ENCODE measurements at regions of chr7 and their contacts with region 1.

Region 1: DNA sequence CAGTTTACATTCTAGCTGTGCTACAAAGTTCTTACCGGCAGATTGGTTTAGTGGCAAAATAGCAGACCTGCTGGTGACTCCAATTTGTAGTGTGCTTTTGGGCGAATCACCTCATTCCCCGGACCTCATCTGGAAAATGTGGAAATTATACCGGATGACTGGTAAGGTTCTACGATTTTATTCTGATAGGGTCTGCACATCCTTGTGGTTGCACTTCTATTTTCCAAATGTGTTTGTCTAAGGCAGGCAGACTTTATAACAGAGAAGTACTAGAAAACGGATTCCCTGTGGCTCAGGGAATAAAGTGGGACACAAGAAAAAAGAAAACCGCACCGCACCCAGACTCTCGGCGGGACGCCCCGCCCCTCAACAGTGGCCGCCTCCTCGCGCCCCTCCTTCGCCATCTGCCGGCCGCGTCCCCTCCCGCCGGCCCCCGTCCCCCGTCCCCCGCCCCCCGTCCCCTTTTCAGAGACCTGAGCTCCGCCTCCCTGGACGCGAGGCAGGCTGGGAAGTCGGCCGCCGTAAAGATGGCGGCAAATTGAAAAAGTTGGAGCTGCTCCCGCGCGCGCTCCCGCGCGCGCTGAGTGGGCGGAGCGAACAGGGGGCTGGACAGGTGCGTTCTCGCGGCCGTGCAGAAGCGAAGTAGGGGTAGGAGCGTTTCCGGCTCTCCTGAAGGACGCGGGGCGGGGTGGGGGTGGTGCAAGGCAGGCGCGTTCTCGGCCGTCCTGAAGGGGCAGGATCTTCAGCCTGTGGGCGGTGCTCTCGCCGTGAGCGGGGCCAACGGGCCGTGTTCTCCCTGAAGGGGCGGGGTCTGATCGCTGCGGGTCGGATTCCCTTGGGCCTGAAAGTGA is 531 bp upstream of the CCM2 start:
- DNase-seq: peak; percentile 96
- ATAC-seq: peak; percentile 88
- H3K4me3 ChIP-seq: peak overlapping the region; percentile 95
- H3K27ac ChIP-seq: peak overlapping the region; percentile 79
- H3K4me1 ChIP-seq: peaks cover 43% of the 10 kb centered on the region
- H3K27me3 ChIP-seq: no peaks in the 10 kb centered on the region
- CTCF ChIP-seq: no peak
- EP300 ChIP-seq: no peak
- POLR2A ChIP-seq: no peak; the same call in none of the 2 replicates
- RAD21 ChIP-seq: no peak

Region 2: DNA sequence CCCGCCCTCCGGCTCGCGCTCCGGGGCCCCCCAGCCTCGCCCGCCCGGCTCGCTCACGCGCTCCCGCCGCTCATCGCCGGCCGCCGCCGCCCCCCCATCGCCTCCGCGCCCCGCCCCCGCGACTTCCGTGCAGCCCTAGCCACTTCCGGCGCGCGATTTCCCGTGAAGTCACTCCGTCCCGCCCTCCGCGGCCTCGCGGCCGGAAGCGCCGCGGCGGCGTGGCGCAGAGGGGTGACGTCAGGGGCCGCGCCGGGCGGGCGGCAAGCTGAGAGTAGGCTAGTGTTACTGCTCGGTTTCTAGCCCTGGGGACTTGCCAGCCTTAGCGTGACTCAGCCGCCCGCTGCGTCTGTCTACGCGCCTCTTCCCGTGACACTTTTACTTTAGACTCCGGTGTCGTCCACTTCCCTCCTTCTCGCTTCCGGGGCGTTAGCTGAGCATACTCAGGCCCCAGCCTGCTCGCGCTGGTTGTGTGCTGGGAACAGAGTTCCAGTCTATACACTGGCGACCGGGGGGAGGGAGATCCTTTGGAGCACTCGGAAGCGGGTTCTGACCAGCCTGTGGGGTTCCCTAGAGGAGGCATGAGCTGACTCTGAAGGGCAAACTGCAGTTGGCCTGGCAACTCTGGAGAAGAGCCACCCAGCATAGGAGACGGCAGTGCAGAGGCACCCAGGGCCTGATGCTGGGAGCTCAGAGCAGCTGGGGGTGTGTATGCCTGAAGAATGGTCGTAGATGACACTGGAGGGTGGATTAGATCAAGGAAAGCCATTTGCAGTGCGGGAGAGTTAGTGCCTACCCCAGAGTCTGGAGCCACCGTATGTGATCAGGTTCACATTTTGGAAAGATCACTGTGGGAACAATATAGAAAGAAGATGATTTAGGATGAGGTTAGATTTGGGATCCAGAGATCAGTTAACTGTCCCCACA is 113.8 kb before region 1 on chr7 and contains the start of gene PURB:
- CTCF ChIA-PET with region 1: no interaction called
- POLR2A ChIA-PET with region 1: interaction called, 6 read pairs
- RAD21 ChIA-PET with region 1: interaction called, 9 read pairs
- SMC1A ChIA-PET with region 1: interaction called, 3 read pairs
- in situ Hi-C with region 1: no loop called
- intact Hi-C with region 1: loop called (anchors 1 kb)
- DNase-seq: peak; percentile 79
- ATAC-seq: peak; percentile 88
- H3K4me3 ChIP-seq: peak within 1 kb of the TSS; percentile 99
- H3K27ac ChIP-seq: peak within 1 kb of the TSS; percentile 99
- H3K4me1 ChIP-seq: 0 out of 2 replicates have a peak, but pooled peaks cover 3% of the 10 kb centered on the region
- H3K27me3 ChIP-seq: no peaks in the 10 kb centered on the region
- CTCF ChIP-seq: no peak; a peak in 1 of 6 replicates
- EP300 ChIP-seq: peak; percentile 62 to 64; a peak in 3 of 4 replicates
- POLR2A ChIP-seq: peak; percentile 91
- RAD21 ChIP-seq: no peak
- polyA plus RNA-seq, gene PURB: 2.5 to 2.8 TPM

Region 3: GRCh38 chr7:44980393-44981034 is 19.0 kb before region 1 on chr7:
- CTCF ChIA-PET with region 1: interaction called, 13 read pairs
- POLR2A ChIA-PET with region 1: interaction called, 280 read pairs
- RAD21 ChIA-PET with region 1: interaction called, 303 read pairs
- SMC1A ChIA-PET with region 1: interaction called, 303 read pairs
- in situ Hi-C with region 1: no loop called
- intact Hi-C with region 1: loop called (anchors 1 kb)
- DNase-seq: peak; percentile 97
- ATAC-seq: peak; percentile 57
- H3K4me3 ChIP-seq: peak overlapping the region; percentile 100
- H3K27ac ChIP-seq: peak overlapping the region; percentile 96
- H3K4me1 ChIP-seq: peaks cover 57% of the 10 kb centered on the region
- H3K27me3 ChIP-seq: no peaks in the 10 kb centered on the region
- CTCF ChIP-seq: no peak
- EP300 ChIP-seq: peak; percentile 61 to 81; a peak in 2 of 4 replicates
- POLR2A ChIP-seq: no peak; the same call in 1 of the 2 replicates
- RAD21 ChIP-seq: no peak

Region 4: DNA sequence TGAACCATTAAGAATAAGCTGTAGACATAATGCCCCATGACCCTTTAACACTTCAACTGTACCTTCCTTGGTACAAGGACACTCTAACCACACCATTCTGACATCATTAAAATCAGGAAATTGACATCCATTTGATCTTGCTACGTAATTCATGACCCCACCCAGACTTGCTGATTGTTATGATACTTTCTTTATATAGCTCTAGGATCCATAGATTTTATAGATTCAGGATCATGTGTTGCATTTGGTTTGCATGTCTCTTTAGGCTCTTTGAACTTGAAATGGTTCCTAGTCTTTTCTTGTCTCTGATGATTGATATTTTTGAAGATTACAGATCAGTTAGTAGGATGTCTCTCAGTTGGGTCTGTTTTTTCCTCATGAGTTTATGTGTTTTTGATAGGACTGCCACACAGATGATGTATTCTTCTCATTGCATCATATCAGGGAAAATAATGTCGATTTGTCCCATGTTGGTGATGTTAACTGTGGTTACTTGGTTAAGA is 14.0 kb after region 1 on chr7:
- CTCF ChIA-PET with region 1: interaction called, 8 read pairs
- POLR2A ChIA-PET with region 1: interaction called, 177 read pairs
- RAD21 ChIA-PET with region 1: interaction called, 10 read pairs
- SMC1A ChIA-PET with region 1: interaction called, 55 read pairs
- in situ Hi-C with region 1: no loop called
- intact Hi-C with region 1: no loop called
- DNase-seq: no peak
- ATAC-seq: no peak
- H3K4me3 ChIP-seq: no peak overlapping the region
- H3K27ac ChIP-seq: no peak overlapping the region
- H3K4me1 ChIP-seq: peaks cover 2% of the 10 kb centered on the region
- H3K27me3 ChIP-seq: no peaks in the 10 kb centered on the region
- CTCF ChIP-seq: no peak
- EP300 ChIP-seq: no peak
- POLR2A ChIP-seq: no peak
- RAD21 ChIP-seq: no peak

Region 5: GRCh38 chr7:45026984-45027773 is 27.7 kb after region 1 on chr7:
- CTCF ChIA-PET with region 1: interaction called, 19 read pairs
- POLR2A ChIA-PET with region 1: interaction called, 177 read pairs
- RAD21 ChIA-PET with region 1: interaction called, 66 read pairs
- SMC1A ChIA-PET with region 1: interaction called, 76 read pairs
- in situ Hi-C with region 1: no loop called
- intact Hi-C with region 1: loop called (anchors 2 kb)
- DNase-seq: peak; percentile 40
- ATAC-seq: peak; percentile 71
- H3K4me3 ChIP-seq: peak overlapping the region; percentile 58
- H3K27ac ChIP-seq: peak overlapping the region; percentile 98
- H3K4me1 ChIP-seq: peaks cover 33% of the 10 kb centered on the region
- H3K27me3 ChIP-seq: no peaks in the 10 kb centered on the region
- CTCF ChIP-seq: no peak
- EP300 ChIP-seq: no peak
- POLR2A ChIP-seq: no peak
- RAD21 ChIP-seq: no peak

Region 6: GRCh38 chr7:45111298-45112223 is 112.1 kb after region 1 on chr7 and contains the start of gene TBRG4:
- CTCF ChIA-PET with region 1: interaction called, 4 read pairs
- POLR2A ChIA-PET with region 1: interaction called, 7 read pairs
- RAD21 ChIA-PET with region 1: interaction called, 9 read pairs
- SMC1A ChIA-PET with region 1: interaction called, 10 read pairs
- in situ Hi-C with region 1: no loop called
- intact Hi-C with region 1: loop called (anchors 2 kb)
- DNase-seq: peak; percentile 85
- ATAC-seq: peak; percentile 94
- H3K4me3 ChIP-seq: peak within 1 kb of the TSS; percentile 90
- H3K27ac ChIP-seq: peak within 1 kb of the TSS; percentile 83
- H3K4me1 ChIP-seq: peaks cover 7% of the 10 kb centered on the region
- H3K27me3 ChIP-seq: no peaks in the 10 kb centered on the region
- CTCF ChIP-seq: peak; percentile 11 to 22 (median 16); a peak in 4 of 6 replicates
- EP300 ChIP-seq: peak; percentile 12 to 57; a peak in 2 of 4 replicates
- POLR2A ChIP-seq: peak; percentile 100
- RAD21 ChIP-seq: no peak
- polyA plus RNA-seq, gene TBRG4: 8.4 to 13.3 TPM